Caco-2 (cell line): ENCODE measurements at regions of chr1 and their contacts with region 1.

Region 1: DNA sequence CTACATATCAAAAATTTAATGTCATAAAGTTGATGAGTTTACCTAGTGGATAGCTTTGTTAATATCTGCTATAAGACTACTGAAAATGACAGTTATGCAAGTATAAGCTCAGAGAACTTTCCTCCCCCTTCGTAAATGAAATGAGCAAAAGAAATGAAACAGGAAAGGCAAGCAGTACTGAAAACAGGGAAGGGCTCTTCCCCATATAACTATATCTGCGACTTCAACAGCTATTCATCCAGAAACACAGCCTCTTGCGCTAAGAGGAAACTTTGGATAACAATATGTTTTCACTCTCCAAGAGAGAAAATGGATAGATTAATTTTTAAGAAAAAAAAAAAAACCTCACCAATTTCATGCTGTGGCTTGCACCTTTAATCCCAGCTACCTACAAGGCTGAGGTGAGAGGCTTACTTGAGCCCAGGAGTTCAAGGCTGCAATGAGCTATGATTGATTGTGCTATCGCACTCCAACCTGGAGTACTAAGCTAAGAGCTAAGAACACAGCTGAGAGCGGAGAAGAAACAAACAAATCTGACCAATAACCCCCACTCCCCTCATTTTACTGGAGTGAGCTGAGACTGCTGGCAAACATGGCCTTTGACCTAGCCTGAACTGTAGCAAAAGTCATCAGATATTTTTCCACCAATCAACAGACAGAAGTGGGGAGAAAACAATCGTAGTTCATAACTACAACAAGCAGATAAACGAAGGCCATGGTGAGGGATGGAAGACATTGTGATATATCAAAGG is 29.0 kb downstream of the METTL18 start:
- DNase-seq: peak; percentile 63 to 65
- H3K4me3 ChIP-seq: no peak overlapping the region
- H3K4me3 Mint-ChIP-seq: peak overlapping the region; percentile 61
- H3K27ac Mint-ChIP-seq: peak overlapping the region; percentile 40
- H3K4me1 ChIP-seq: peaks cover 23% of the 10 kb centered on the region
- H3K4me1 Mint-ChIP-seq: peaks cover 25% of the 10 kb centered on the region
- H3K27me3 ChIP-seq: no peaks in the 10 kb centered on the region
- H3K27me3 Mint-ChIP-seq: no peaks in the 10 kb centered on the region
- CTCF ChIP-seq: no peak

Region 2: GRCh38 chr1:169794530-169795416 is 29.0 kb after region 1 on chr1 and contains the start of gene METTL18:
- CTCF ChIA-PET with region 1: no interaction called
- POLR2A ChIA-PET with region 1: interaction called, 9 read pairs
- intact Hi-C with region 1: loop called (anchors 1 kb)
- DNase-seq: peak; percentile 93 to 96
- H3K4me3 ChIP-seq: peak within 1 kb of the TSS; percentile 74
- H3K4me3 Mint-ChIP-seq: peak within 1 kb of the TSS; percentile 100
- H3K27ac Mint-ChIP-seq: peak within 1 kb of the TSS; percentile 99
- H3K4me1 ChIP-seq: peaks cover 6% of the 10 kb centered on the region
- H3K4me1 Mint-ChIP-seq: peaks cover 6% of the 10 kb centered on the region
- H3K27me3 ChIP-seq: no peaks in the 10 kb centered on the region
- H3K27me3 Mint-ChIP-seq: no peaks in the 10 kb centered on the region
- CTCF ChIP-seq: no peak
- total RNA-seq, gene METTL18: 6.9 and 7.9 TPM in 2 replicates